ENCODE measurements at regions of chr22 and their contacts with region 1.

Region 1: GRCh38 chr22:38181453-38182247 is at the start of gene PLA2G6:
- DNase-seq: peak; percentile 91 to 98
- ATAC-seq: peak; percentile 92
- H3K4me3 ChIP-seq: peak within 1 kb of the TSS; percentile 58
- H3K27ac ChIP-seq: peak within 1 kb of the TSS; percentile 92 to 94
- H3K4me1 ChIP-seq: peaks cover 42% of the 10 kb centered on the region
- CTCF ChIP-seq: no peak
- EP300 ChIP-seq: no peak
- POLR2A ChIP-seq: 0 out of 2 replicates have a peak, but pooled peaks have one; percentile 12
- RAD21 ChIP-seq: no peak
- polyA plus RNA-seq, gene PLA2G6: 7.4 and 10.7 TPM in 2 replicates

Region 2: DNA sequence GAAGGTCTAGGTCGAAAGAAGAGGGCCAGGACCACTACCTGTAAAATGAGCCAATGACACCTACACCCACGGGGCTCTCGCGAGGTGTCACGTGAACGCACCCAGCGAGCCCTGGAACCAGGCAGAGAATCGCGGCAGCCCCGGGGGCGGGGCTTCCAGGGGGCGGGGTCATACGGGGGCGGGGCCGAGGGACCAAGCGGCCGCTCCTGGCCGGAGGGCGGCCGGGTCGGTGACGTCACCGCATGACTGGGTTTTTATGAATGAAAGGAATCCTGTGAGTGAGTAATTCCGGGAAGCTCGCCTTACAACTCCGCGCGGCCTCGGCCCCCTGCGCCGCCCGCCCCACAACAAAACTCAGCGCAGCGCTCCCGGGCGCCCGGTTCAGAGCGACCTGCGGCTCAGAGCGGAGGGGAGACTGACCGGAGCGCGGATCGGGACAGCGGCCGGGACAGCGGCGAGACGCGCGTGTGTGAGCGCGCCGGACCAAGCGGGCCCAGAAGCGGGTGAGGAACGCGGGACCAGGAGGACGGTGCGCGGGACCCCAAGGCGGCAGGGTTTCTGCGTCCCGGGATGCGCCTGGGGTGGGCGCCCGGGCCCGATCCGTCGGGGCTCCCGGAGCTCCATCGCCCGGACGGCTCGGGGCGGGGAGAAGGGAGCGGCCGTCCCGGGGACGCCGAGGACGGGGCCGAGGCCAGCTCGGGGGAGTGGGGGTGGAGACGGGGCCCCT is 20.2 kb after region 1 on chr22 and contains the start of gene MAFF:
- CTCF ChIA-PET with region 1: interaction called, 3 read pairs
- POLR2A ChIA-PET with region 1: interaction called, 14 read pairs
- DNase-seq: peak; percentile 64 to 94
- ATAC-seq: peak; percentile 81 to 84
- H3K4me3 ChIP-seq: peak within 1 kb of the TSS; percentile 67
- H3K27ac ChIP-seq: peak within 1 kb of the TSS; percentile 85 to 96
- H3K4me1 ChIP-seq: peaks cover 12% of the 10 kb centered on the region; the same call in 1 of the 3 replicates
- CTCF ChIP-seq: no peak
- EP300 ChIP-seq: no peak
- POLR2A ChIP-seq: no peak
- RAD21 ChIP-seq: no peak
- polyA plus RNA-seq, gene MAFF: 3.5 and 4.0 TPM in 2 replicates

Measured in A549 (cell line).